Natural killer cell (primary cell): ENCODE measurements at regions of chr16 and their contacts with region 1.

Region 1: GRCh38 chr16:69451166-69451565 is 26.7 kb downstream of the CYB5B start:
- DNase-seq: no peak
- ATAC-seq: no peak
- H3K4me3 ChIP-seq: no peak overlapping the region
- H3K4me3 Mint-ChIP-seq: no peak overlapping the region
- H3K27ac ChIP-seq: no peak overlapping the region
- H3K27ac Mint-ChIP-seq: peak overlapping the region; percentile 63 to 70
- H3K4me1 ChIP-seq: peaks cover 27% of the 10 kb centered on the region
- H3K4me1 Mint-ChIP-seq: peaks cover 52 to 58% of the 10 kb centered on the region in 2 donors
- H3K27me3 ChIP-seq: no peaks in the 10 kb centered on the region
- H3K27me3 Mint-ChIP-seq: no peaks in the 10 kb centered on the region
- CTCF ChIP-seq: no peak

Region 2: GRCh38 chr16:69329369-69330285 is 121.5 kb before region 1 on chr16:
- intact Hi-C with region 1: loop called (anchors 10 kb)
- DNase-seq: peak in 1 of 2 donors; percentile 71
- ATAC-seq: peak; percentile 36 to 57 (median 53)
- H3K4me3 ChIP-seq: peak overlapping the region; percentile 44
- H3K4me3 Mint-ChIP-seq: peak overlapping the region; percentile 77
- H3K27ac ChIP-seq: no peak overlapping the region
- H3K27ac Mint-ChIP-seq: peak overlapping the region in 1 of 2 donors; percentile 44
- H3K4me1 ChIP-seq: peaks cover 26% of the 10 kb centered on the region
- H3K4me1 Mint-ChIP-seq: peaks cover 14 to 19% of the 10 kb centered on the region in 2 donors
- H3K27me3 ChIP-seq: no peaks in the 10 kb centered on the region
- H3K27me3 Mint-ChIP-seq: no peaks in the 10 kb centered on the region
- CTCF ChIP-seq: no peak

Region 3: DNA sequence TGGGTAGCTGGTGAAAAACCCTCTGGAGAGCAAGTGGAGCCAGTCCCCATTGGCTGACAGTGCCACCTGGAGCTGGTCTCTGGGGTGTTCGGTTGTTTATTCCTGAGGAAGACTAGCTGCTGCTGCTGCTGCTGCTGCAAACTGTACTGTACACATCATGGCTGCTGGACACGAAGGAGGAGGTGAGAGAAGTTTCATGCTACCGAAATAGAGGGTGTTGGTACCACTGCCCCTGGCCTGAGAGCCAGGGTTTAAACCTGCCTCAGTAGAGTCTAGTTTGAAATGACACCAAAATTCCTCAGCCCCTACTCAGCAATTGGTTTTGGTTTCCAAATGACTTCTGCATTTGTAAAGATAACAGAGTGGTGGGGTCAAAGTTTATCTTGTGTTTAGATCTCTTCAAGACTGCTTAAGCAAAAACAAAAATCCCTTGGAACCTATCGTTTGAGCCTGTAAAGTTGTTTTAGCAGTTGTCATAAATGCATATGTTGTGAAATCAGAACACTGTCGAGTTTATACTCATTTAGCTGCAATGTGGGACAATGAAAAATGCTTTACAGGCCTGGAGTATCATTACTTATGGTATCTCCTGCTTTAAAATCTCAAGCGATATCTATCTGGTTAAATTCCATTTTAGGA is 14.0 kb after region 1 on chr16:
- intact Hi-C with region 1: no loop called
- DNase-seq: peak; percentile 31 to 46
- ATAC-seq: peak; percentile 79 to 82 (median 82)
- H3K4me3 ChIP-seq: no peak overlapping the region
- H3K4me3 Mint-ChIP-seq: peak overlapping the region; percentile 64
- H3K27ac ChIP-seq: peak overlapping the region; percentile 53
- H3K27ac Mint-ChIP-seq: peak overlapping the region; percentile 91 to 94
- H3K4me1 ChIP-seq: peaks cover 17% of the 10 kb centered on the region
- H3K4me1 Mint-ChIP-seq: peaks cover 45 to 49% of the 10 kb centered on the region in 2 donors
- H3K27me3 ChIP-seq: no peaks in the 10 kb centered on the region
- H3K27me3 Mint-ChIP-seq: no peaks in the 10 kb centered on the region
- CTCF ChIP-seq: peak; percentile 8

Region 4: DNA sequence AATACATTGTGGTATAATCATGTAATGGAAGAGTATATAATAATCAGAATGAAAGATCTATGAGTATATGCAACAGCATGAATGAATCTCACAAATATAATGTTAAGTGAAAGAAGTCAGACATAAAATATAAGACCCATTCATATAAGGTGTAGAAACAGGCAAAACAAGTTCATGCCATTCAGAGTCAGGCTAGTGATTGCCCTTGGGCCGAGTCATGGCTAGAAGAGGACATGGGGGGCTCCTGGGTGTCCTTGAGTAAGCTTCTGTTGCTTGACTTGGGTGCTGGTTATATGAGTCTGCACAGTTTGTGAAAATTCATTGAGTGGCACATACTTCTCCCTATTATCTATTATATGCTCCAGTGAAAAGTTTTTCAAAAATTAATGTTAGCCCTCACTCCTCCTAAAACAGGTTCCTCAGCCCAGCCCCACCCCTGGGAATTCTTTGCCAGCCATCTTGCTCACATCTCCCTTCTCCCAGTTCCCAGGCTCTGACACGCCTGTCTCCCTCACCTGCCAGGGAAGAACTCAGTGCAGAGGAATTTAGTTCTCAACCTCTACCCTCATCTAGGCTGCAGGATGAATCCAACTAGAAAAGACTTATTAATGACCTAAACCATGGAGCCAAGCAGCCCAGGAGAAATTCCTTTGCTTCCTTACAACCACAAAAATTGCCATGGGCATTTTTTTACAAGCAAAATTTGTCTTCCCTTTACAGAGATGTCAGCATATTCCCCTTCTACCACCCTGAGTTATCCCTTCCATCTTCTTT is 62.2 kb after region 1 on chr16:
- intact Hi-C with region 1: no loop called
- DNase-seq: no peak
- ATAC-seq: no peak
- H3K4me3 ChIP-seq: no peak overlapping the region
- H3K4me3 Mint-ChIP-seq: no peak overlapping the region
- H3K27ac ChIP-seq: no peak overlapping the region
- H3K27ac Mint-ChIP-seq: no peak overlapping the region
- H3K4me1 ChIP-seq: no peaks in the 10 kb centered on the region
- H3K4me1 Mint-ChIP-seq: no peaks in the 10 kb centered on the region
- H3K27me3 ChIP-seq: no peaks in the 10 kb centered on the region
- H3K27me3 Mint-ChIP-seq: peaks cover 0 to 2% of the 10 kb centered on the region in 2 donors
- CTCF ChIP-seq: no peak